Spleen (tissue), 13 donors: ENCODE measurements at regions of chr11 and their contacts with region 1.

Region 1: DNA sequence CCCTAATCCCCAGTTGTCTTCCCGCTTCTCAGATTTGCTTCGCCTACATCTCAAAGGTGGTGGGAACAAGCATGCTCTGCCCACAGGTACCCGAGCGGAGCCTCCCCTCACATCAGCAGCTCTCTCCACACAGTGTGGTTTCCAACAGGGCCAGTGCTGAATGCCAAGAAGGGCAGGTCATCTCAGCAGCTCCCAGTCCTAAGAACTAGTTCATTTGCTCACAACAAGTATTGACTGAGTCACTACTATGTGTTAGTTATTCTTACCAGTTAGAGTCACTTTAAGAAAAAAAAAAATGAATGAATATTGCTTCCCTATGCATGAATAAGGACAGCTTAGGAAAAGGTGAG is 66.2 kb downstream of the THAP12 start:
- DNase-seq: no peak
- H3K4me3 ChIP-seq: no peak overlapping the region
- H3K27ac ChIP-seq: no peak overlapping the region
- H3K4me1 ChIP-seq: peaks cover 0 to 5% (median 0%) of the 10 kb centered on the region in 6 donors
- H3K27me3 ChIP-seq: peaks cover 0 to 15% (median 4%) of the 10 kb centered on the region in 7 donors
- CTCF ChIP-seq: no peak
- POLR2A ChIP-seq: no peak

Region 2: DNA sequence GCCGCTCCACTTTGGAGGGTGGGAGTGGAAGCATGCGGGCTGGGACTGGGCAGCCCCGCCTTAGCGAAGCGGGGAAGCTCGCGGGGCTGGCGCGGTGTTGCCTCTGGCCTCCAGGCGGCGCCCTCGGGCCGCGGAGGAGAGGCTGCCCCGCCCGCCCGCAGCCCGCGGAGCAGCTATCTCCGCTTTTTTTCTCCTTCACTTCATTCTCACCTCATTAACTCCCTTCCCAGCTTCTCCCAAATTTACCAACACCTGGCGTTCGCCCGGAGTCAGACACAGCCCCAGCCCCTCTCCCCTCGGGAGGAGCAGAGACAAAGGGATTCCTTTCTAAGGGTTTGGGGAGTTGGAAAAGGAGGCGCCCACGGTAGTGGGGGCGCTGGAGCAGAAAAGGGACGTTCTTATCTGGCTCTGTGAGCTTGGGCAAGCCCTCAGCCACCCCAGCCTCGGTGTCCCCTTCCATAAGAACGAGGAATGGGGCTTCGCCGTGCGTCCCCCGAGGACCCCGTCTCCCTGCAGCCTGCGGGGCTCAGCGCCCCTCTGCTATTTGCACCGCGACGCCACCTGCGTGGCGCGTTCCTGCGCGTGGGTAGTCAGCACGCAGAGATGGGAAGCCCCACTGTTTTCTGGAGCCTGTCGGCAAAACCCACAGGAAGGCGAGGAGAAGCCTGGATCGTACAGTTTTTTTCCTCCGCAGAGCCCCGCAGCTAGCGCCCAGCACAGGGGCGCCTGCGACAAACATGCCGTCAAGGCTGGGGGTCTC is 106.9 kb before region 1 on chr11:
- intact Hi-C with region 1: loop called (anchors 2 kb)
- DNase-seq: peak; percentile 96
- H3K4me3 ChIP-seq: peak overlapping the region; percentile 39 to 81 (median 64)
- H3K27ac ChIP-seq: peak overlapping the region in 1 of 8 donors; percentile 35
- H3K4me1 ChIP-seq: peaks cover 35 to 66% (median 58%) of the 10 kb centered on the region in 6 donors
- H3K27me3 ChIP-seq: peaks cover 6 to 100% (median 58%) of the 10 kb centered on the region in 7 donors
- CTCF ChIP-seq: peak; percentile 89 to 99 (median 98)
- POLR2A ChIP-seq: no peak